ENCODE measurements at regions of chr2 and their contacts with region 1.

Region 1: GRCh38 chr2:178112202-178113152 is at the start of gene RBM45:
- DNase-seq: peak; percentile 91
- H3K4me3 Mint-ChIP-seq: peak within 1 kb of the TSS; percentile 95
- H3K27ac Mint-ChIP-seq: peak within 1 kb of the TSS; percentile 74
- H3K4me1 Mint-ChIP-seq: peaks cover 36% of the 10 kb centered on the region
- H3K27me3 Mint-ChIP-seq: no peaks in the 10 kb centered on the region
- total RNA-seq, gene RBM45: 12.2 to 12.5 TPM

Region 2: DNA sequence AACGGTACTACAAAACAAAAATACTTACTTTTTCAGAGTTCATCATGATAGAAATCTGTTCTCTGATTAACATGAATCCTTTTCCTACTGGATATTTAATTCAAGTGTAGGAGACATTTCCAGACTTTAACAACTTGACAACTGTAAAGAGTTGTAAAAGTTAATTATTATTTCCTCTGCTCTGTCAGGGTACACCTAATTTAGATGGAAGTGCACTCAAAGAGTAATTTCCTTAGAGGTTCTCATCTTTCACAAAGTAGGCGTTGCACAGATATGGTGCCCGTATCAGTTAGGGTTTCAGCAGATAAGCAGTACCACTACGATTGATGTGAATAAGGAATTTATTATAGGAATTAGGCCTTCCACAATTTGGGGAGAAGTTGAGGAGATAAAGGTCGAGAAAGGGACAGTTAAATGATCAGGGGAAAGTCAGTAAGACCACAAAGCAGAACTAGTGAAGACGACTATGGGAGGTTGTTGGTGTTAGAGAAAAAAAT is 23.7 kb before region 1 on chr2:
- CTCF ChIA-PET with region 1: no interaction called
- POLR2A ChIA-PET with region 1: no interaction called
- intact Hi-C with region 1: no loop called
- DNase-seq: no peak
- H3K4me3 Mint-ChIP-seq: no peak overlapping the region
- H3K27ac Mint-ChIP-seq: no peak overlapping the region
- H3K4me1 Mint-ChIP-seq: no peaks in the 10 kb centered on the region
- H3K27me3 Mint-ChIP-seq: peaks cover 14% of the 10 kb centered on the region

Region 3: DNA sequence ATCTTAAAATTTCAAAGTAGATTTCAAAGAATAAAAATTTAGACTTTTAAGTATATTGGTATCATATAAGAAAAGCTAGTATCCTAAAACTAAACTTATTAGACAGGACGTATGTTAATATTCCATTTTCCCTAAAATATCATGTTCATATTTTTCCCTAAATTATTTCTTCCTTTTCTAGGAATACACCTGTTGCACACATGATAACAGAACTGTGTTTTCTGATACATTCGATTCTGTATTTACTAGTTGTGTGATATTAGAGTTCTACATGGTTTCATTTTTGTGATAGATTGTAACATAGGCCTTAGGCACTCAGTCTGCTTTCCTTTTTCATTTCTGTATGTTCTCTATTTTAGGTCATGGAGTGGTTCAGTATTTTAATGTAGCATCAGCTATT is 10.7 kb after region 1 on chr2:
- CTCF ChIA-PET with region 1: interaction called, 14 read pairs
- POLR2A ChIA-PET with region 1: interaction called, 3 read pairs
- intact Hi-C with region 1: no loop called
- DNase-seq: no peak
- H3K4me3 Mint-ChIP-seq: no peak overlapping the region
- H3K27ac Mint-ChIP-seq: no peak overlapping the region
- H3K4me1 Mint-ChIP-seq: no peaks in the 10 kb centered on the region
- H3K27me3 Mint-ChIP-seq: no peaks in the 10 kb centered on the region

Region 4: GRCh38 chr2:178136321-178137025 is 24.0 kb after region 1 on chr2:
- CTCF ChIA-PET with region 1: interaction called, 14 read pairs
- POLR2A ChIA-PET with region 1: interaction called, 4 read pairs
- intact Hi-C with region 1: no loop called
- DNase-seq: no peak
- H3K4me3 Mint-ChIP-seq: no peak overlapping the region
- H3K27ac Mint-ChIP-seq: no peak overlapping the region
- H3K4me1 Mint-ChIP-seq: no peaks in the 10 kb centered on the region
- H3K27me3 Mint-ChIP-seq: no peaks in the 10 kb centered on the region

Region 5: GRCh38 chr2:178280244-178280852 is 167.9 kb after region 1 on chr2:
- CTCF ChIA-PET with region 1: interaction called, 17 read pairs
- POLR2A ChIA-PET with region 1: no interaction called
- intact Hi-C with region 1: loop called (anchors 1 kb)
- DNase-seq: no peak
- H3K4me3 Mint-ChIP-seq: no peak overlapping the region
- H3K27ac Mint-ChIP-seq: no peak overlapping the region
- H3K4me1 Mint-ChIP-seq: no peaks in the 10 kb centered on the region
- H3K27me3 Mint-ChIP-seq: peaks cover 17% of the 10 kb centered on the region

Region 6: GRCh38 chr2:178450774-178451525 is 338.5 kb after region 1 on chr2 and contains the starts of genes PJVK and PRKRA:
- CTCF ChIA-PET with region 1: interaction called, 4 read pairs
- POLR2A ChIA-PET with region 1: no interaction called
- intact Hi-C with region 1: loop called (anchors 1 kb)
- DNase-seq: peak; percentile 97
- H3K4me3 Mint-ChIP-seq: peak within 1 kb of the TSS; percentile 89
- H3K27ac Mint-ChIP-seq: peak within 1 kb of the TSS; percentile 95
- H3K4me1 Mint-ChIP-seq: peaks cover 24% of the 10 kb centered on the region
- H3K27me3 Mint-ChIP-seq: no peaks in the 10 kb centered on the region
- total RNA-seq, gene PJVK: 2.3 to 3.0 TPM
- total RNA-seq, gene PRKRA: 56.3 to 60.3 TPM

Region 7: DNA sequence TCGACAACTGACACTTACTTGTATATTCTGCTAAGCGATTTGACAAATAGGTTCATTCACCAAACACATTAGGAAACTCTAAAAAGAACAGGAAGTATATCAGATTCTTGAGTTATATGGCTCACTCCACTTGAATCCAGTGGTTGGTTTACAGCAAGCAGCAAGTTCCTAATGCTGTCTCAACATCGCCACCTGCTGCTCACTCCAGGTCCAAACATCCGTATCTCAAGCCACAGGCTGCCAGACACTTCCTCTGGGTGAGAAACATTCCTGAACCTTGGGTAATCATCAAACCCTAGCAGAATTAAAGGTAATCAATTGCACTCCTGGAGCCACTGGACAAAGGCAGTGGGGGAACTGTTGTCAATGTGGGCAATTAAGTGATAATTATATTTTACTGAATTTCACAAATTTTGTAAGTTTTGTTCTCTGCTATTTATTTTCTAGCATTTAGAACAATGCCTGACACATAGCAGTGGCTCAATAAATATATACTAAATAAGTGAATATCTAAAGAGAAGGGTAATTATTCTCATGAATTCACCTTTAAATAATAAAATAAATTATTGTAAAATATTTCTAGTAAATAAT is 801.9 kb after region 1 on chr2:
- CTCF ChIA-PET with region 1: interaction called, 6 read pairs
- POLR2A ChIA-PET with region 1: no interaction called
- intact Hi-C with region 1: loop called (anchors 10 kb)
- DNase-seq: peak; percentile 79
- H3K4me3 Mint-ChIP-seq: no peak overlapping the region
- H3K27ac Mint-ChIP-seq: no peak overlapping the region
- H3K4me1 Mint-ChIP-seq: peaks cover 6% of the 10 kb centered on the region
- H3K27me3 Mint-ChIP-seq: no peaks in the 10 kb centered on the region